ENCODE measurements at regions of chr20 and their contacts with region 1.

Region 1: GRCh38 chr20:20276811-20277530 is 90.9 kb upstream of the INSM1 start:
- DNase-seq: peak in 1 of 2 donors; percentile 65
- H3K4me3 ChIP-seq: no peak overlapping the region
- H3K27ac ChIP-seq: no peak overlapping the region
- H3K4me1 ChIP-seq: no peaks in the 10 kb centered on the region
- H3K27me3 ChIP-seq: no peaks in the 10 kb centered on the region
- CTCF ChIP-seq: no peak

Region 2: DNA sequence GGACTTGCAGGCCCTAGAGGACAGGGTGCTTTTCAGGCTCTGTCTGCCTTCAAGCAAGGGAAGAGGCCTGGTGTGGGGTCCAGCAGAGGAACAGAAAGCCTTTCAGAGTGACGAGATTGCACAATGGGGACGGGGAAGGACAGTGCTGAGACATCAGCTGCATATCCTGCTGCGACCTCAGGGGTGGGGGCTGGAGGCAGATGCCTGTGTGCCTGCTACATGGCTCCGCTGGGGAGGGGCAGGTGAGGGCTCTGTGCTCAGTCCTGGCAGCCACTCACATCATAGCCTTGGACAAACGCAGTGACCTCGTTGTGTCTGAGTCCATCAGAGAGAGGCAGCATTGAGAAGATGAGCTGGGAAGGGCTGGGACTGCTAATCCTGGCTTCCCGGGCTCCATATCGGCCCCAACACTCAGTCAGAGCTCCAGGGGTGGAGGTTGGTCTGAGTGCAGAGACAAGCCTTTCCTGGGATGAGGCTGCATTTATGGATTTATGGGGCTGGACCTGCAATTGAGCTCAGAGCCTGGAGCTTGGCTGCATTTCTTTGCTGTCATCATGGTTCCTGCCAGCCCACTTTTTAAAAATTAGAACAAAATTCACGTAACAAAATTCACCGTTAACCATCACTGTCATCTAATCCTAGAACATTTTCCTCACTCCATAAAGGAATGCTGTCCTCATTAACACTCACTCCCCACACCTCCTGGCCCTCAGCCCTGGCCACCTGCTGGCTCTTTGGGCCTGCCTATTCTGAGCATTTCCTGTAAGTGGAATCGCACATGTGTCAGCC is 1261.4 kb before region 1 on chr20:
- intact Hi-C with region 1: loop called (anchors 5 kb)
- DNase-seq: no peak
- H3K4me3 ChIP-seq: no peak overlapping the region
- H3K27ac ChIP-seq: no peak overlapping the region
- H3K4me1 ChIP-seq: peaks cover 0 to 15% (median 4%) of the 10 kb centered on the region in 4 donors
- H3K27me3 ChIP-seq: no peaks in the 10 kb centered on the region
- CTCF ChIP-seq: no peak

Measured in tibial artery (tissue), 4 donors.